CD8-positive, alpha-beta memory T cell (primary cell): ENCODE measurements at regions of chr19 and their contacts with region 1.

Region 1: DNA sequence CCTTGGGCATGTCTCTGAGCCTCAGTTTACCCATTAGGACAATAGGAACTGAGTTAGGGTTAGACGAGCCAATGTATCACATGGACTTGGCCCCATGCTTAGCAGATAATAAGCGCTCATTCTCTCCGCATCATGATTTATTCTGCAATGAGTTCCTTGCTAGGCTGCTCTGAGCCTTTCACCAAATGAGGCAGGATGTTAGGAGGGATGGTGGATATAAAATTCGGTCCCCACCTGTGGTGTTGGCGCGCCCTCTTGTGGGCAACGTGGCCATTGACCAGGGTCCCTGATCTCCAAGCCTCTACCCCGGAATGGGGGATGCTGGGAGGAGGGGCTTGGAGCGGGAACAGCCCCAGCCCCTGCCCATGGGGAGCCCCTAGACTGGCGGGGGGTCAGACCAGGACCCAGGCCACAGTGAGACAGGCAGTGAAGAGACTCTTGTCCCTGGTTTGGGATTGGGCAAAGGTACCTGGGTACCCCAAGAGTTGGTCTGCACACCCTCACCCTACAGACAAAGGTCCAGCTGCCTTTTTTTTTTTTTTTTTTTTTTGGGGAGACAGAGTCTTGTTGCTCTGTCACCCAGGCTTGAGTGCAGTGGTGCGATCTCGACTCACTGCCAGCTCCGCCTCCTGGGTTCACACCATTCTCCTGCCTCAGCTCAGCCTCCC is 43.9 kb downstream of the CERS4 start:
- DNase-seq: peak; percentile 70 to 87 (median 74)
- H3K4me3 ChIP-seq: no peak overlapping the region
- H3K4me3 Mint-ChIP-seq: no peak overlapping the region
- H3K27ac ChIP-seq: no peak overlapping the region
- H3K27ac Mint-ChIP-seq: peak overlapping the region in 1 of 8 donors; percentile 88
- H3K4me1 ChIP-seq: no peaks in the 10 kb centered on the region
- H3K4me1 Mint-ChIP-seq: peaks cover 4 to 14% (median 8%) of the 10 kb centered on the region in 3 donors
- H3K27me3 ChIP-seq: no peaks in the 10 kb centered on the region
- H3K27me3 Mint-ChIP-seq: no peaks in the 10 kb centered on the region

Region 2: DNA sequence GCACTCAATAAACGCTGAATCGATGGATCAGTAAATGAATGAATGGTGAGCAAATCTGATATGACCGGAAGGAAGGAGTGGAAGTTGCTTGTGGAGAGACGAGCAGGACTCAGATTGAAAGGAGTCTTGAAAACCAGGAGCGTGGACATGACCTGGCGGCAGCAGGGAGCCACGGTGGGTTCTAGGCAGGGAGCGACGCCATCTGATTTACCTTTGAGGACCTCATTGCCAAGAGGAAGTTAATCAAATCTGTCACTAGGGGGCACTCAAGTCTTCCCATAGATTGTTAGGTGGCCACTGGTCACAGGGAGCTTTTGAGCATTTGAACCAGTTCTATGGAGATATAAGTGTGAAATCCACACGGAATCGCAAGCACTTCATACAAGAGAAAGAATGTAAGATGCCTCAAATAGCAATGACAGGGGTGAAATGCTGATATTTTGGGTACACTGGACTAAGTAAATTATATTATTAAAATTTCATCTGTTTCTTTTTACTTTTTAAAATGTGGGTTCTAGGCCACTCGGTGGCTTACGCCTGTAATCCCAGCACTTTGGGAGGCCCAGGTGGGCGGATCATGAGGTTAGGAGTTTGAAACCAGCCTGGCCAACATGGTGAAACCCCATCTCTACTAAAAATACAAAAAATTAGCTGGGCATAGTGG is 94.5 kb before region 1 on chr19:
- CTCF ChIA-PET with region 1: interaction called, 16 read pairs
- POLR2A ChIA-PET with region 1: no interaction called
- DNase-seq: peak in 3 of 5 donors; percentile 32 to 64 (median 61)
- H3K4me3 ChIP-seq: no peak overlapping the region
- H3K4me3 Mint-ChIP-seq: no peak overlapping the region
- H3K27ac ChIP-seq: no peak overlapping the region
- H3K27ac Mint-ChIP-seq: peak overlapping the region in 1 of 8 donors; percentile 90
- H3K4me1 ChIP-seq: no peaks in the 10 kb centered on the region
- H3K4me1 Mint-ChIP-seq: peaks cover 0 to 5% (median 1%) of the 10 kb centered on the region in 3 donors
- H3K27me3 ChIP-seq: no peaks in the 10 kb centered on the region
- H3K27me3 Mint-ChIP-seq: peaks cover 16 to 27% of the 10 kb centered on the region in 2 donors

Region 3: GRCh38 chr19:8204961-8205360 is 48.1 kb before region 1 on chr19:
- CTCF ChIA-PET with region 1: no interaction called
- POLR2A ChIA-PET with region 1: no interaction called
- DNase-seq: no peak
- H3K4me3 ChIP-seq: no peak overlapping the region
- H3K4me3 Mint-ChIP-seq: no peak overlapping the region
- H3K27ac ChIP-seq: no peak overlapping the region
- H3K27ac Mint-ChIP-seq: peak overlapping the region in 1 of 8 donors; percentile 64
- H3K4me1 ChIP-seq: peaks cover 3% of the 10 kb centered on the region
- H3K4me1 Mint-ChIP-seq: peaks cover 3 to 17% (median 4%) of the 10 kb centered on the region in 3 donors
- H3K27me3 ChIP-seq: no peaks in the 10 kb centered on the region
- H3K27me3 Mint-ChIP-seq: peaks cover 0 to 1% of the 10 kb centered on the region in 2 donors

Region 4: GRCh38 chr19:8269724-8270123 is 16.7 kb after region 1 on chr19:
- CTCF ChIA-PET with region 1: interaction called, 10 read pairs
- POLR2A ChIA-PET with region 1: interaction called, 4 read pairs
- DNase-seq: no peak
- H3K4me3 ChIP-seq: peak overlapping the region; percentile 79
- H3K4me3 Mint-ChIP-seq: peak overlapping the region; percentile 91 to 99 (median 94)
- H3K27ac ChIP-seq: peak overlapping the region; percentile 63
- H3K27ac Mint-ChIP-seq: peak overlapping the region; percentile 93 to 98 (median 96)
- H3K4me1 ChIP-seq: peaks cover 7% of the 10 kb centered on the region
- H3K4me1 Mint-ChIP-seq: peaks cover 12 to 20% (median 17%) of the 10 kb centered on the region in 3 donors
- H3K27me3 ChIP-seq: no peaks in the 10 kb centered on the region
- H3K27me3 Mint-ChIP-seq: no peaks in the 10 kb centered on the region